Activated CD8-positive, alpha-beta memory T cell treated with anti-CD3 and anti-CD28 coated beads, Interleukin-2, amount 10 ng/mL, durations not matched to agents 7 days and 5 days (primary cell): ENCODE measurements at regions of chr5 and their contacts with region 1.

Region 1: DNA sequence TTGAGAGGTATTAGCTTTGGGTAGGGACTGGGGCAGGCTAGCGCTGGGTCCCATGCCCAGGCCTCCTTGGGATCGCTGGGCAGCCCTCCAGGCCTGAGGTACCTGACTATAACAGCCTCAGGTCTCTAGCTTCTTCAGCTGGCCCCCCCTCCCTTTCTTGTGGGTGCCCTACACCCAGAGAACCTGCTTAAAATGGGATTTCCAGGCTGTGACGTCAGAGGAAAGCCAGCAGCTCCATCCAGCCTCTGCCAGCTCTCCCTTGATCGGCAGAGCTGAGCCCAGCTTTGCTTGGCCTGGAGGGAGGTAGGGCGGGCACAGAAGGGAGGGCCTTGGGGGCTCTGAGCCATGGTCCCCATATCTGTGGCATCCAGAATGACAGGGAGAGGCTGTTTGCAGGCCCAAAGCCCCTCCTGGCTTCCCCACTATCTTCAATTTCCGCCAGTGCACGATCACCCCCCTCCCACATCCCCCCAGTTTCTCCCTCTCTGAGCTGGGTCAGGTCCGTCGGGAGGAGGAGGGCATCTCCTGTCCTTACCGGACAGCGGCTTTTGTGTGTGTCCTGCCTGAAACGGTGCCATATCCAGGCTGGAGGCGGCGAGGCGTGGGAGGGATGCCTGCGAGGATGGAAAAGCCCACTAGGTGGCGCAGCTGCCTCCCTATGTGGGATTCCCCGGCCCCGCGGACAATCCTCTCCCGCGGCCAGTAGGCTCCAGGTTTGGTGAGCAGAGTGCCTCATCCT is 10.8 kb downstream of the REEP2 start:
- DNase-seq: peak; percentile 84
- ATAC-seq: peak; percentile 95
- H3K4me3 Mint-ChIP-seq: no peak overlapping the region
- H3K27ac Mint-ChIP-seq: no peak overlapping the region
- H3K4me1 Mint-ChIP-seq: peaks cover 4% of the 10 kb centered on the region
- H3K27me3 Mint-ChIP-seq: peaks cover 2% of the 10 kb centered on the region

Region 2: DNA sequence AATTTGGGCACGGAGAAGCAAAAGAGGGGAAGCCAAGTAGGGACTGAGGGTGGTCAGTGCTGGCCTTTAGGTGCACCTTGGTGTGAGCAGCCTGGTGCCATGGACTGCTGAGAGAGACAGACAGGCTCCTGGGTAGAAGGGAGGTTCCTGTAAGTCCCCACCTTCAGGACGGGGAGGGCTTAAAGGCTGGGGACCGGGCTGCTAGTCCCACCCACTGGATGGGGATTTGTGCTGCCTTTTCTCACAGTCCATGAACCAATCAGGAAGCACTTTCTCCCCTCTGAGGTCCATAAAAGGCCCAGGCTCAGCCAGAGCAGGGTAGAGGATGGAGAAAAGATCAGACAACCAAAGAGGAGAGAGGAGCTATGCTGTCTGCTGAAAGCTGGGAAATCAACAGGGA is 133.3 kb before region 1 on chr5:
- CTCF ChIA-PET with region 1: no interaction called
- DNase-seq: no peak
- ATAC-seq: no peak
- H3K4me3 Mint-ChIP-seq: no peak overlapping the region
- H3K27ac Mint-ChIP-seq: no peak overlapping the region
- H3K4me1 Mint-ChIP-seq: no peaks in the 10 kb centered on the region
- H3K27me3 Mint-ChIP-seq: no peaks in the 10 kb centered on the region

Region 3: GRCh38 chr5:138438724-138439476 is 10.8 kb before region 1 on chr5 and contains the start of gene REEP2:
- CTCF ChIA-PET with region 1: interaction called, 37 read pairs
- DNase-seq: peak; percentile 65
- ATAC-seq: peak; percentile 91
- H3K4me3 Mint-ChIP-seq: peak within 1 kb of the TSS; percentile 71
- H3K27ac Mint-ChIP-seq: no peak within 1 kb of the TSS
- H3K4me1 Mint-ChIP-seq: peaks cover 13% of the 10 kb centered on the region
- H3K27me3 Mint-ChIP-seq: peaks cover 7% of the 10 kb centered on the region
- total RNA-seq, gene REEP2: 1.7 to 5.4 TPM

Region 4: GRCh38 chr5:138508963-138509362 is 59.3 kb after region 1 on chr5:
- CTCF ChIA-PET with region 1: interaction called, 91 read pairs
- DNase-seq: no peak
- ATAC-seq: no peak
- H3K4me3 Mint-ChIP-seq: no peak overlapping the region
- H3K27ac Mint-ChIP-seq: no peak overlapping the region
- H3K4me1 Mint-ChIP-seq: no peaks in the 10 kb centered on the region
- H3K27me3 Mint-ChIP-seq: no peaks in the 10 kb centered on the region

Region 5: DNA sequence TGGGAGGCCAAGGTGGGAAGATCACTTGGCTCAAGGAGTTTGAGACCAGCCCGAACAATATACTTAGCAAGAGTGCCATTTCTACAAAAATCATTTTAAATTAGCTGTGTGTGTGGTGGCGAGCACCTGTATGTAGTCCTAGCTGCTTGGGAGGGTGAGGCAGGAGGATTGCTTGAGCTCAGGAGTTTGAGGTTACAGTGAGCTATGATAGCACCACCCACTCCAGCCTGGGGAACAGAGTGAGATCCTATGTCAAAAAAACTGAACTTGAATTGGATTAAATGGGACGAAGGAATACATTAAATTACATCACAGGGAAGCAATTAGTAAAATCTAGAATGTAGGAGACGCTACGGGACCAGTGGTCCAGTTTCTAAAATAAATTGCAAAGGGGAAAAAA is 99.7 kb after region 1 on chr5:
- CTCF ChIA-PET with region 1: interaction called, 15 read pairs
- DNase-seq: no peak
- ATAC-seq: no peak
- H3K4me3 Mint-ChIP-seq: no peak overlapping the region
- H3K27ac Mint-ChIP-seq: no peak overlapping the region
- H3K4me1 Mint-ChIP-seq: peaks cover 32% of the 10 kb centered on the region
- H3K27me3 Mint-ChIP-seq: no peaks in the 10 kb centered on the region

Region 6: GRCh38 chr5:138597665-138598400 is 148.2 kb after region 1 on chr5:
- CTCF ChIA-PET with region 1: no interaction called
- DNase-seq: no peak
- ATAC-seq: no peak
- H3K4me3 Mint-ChIP-seq: no peak overlapping the region
- H3K27ac Mint-ChIP-seq: no peak overlapping the region
- H3K4me1 Mint-ChIP-seq: peaks cover 13% of the 10 kb centered on the region
- H3K27me3 Mint-ChIP-seq: peaks cover 23% of the 10 kb centered on the region